ENCODE measurements at regions of chr11 and their contacts with region 1.

Region 1: DNA sequence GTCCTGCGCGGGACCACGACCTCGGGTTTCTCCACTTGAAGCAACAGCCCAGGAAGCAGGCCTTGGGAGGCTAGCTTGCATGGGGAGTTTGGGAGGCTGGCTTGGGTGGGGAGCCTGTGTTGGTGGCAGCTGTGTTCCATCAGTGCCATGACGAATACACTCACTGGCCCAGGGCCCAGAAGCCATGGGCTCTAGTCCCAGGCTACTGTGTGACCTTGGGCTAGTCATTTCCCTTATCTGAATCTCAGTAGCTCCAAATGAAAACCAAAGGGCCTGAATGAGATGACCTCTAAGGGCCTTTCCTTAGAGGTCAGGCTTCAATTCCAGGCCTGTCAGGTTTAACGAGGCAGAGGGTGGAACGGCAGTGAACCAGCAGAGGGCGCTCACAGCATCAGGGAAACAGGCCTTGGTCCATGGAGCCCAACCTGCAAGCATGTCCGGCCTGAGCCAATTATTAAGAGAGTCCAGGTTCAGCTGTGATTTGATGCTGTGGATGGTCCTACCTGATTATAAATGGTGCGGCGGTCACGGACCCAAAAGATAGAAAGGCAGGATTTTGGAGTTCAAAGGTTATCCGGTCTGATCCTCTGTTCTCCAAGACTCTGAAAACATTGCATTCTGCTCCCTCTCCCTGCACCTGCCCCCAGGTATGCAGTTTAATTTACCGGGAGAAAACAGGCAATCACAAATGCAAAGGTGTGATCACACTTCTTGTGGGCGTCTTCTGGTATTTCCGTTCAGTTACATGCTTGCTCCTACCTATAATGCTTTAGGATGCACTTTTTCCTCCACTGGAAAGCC is 15.9 kb downstream of the PTPN5 start:
- DNase-seq: peak; percentile 87
- H3K4me3 Mint-ChIP-seq: no peak overlapping the region
- H3K27ac Mint-ChIP-seq: no peak overlapping the region
- H3K4me1 Mint-ChIP-seq: peaks cover 6% of the 10 kb centered on the region
- H3K27me3 Mint-ChIP-seq: no peaks in the 10 kb centered on the region

Region 2: GRCh38 chr11:18749697-18750319 is 25.9 kb before region 1 on chr11:
- CTCF ChIA-PET with region 1: no interaction called
- intact Hi-C with region 1: no loop called
- DNase-seq: no peak
- H3K4me3 Mint-ChIP-seq: no peak overlapping the region
- H3K27ac Mint-ChIP-seq: no peak overlapping the region
- H3K4me1 Mint-ChIP-seq: no peaks in the 10 kb centered on the region
- H3K27me3 Mint-ChIP-seq: no peaks in the 10 kb centered on the region

Region 3: DNA sequence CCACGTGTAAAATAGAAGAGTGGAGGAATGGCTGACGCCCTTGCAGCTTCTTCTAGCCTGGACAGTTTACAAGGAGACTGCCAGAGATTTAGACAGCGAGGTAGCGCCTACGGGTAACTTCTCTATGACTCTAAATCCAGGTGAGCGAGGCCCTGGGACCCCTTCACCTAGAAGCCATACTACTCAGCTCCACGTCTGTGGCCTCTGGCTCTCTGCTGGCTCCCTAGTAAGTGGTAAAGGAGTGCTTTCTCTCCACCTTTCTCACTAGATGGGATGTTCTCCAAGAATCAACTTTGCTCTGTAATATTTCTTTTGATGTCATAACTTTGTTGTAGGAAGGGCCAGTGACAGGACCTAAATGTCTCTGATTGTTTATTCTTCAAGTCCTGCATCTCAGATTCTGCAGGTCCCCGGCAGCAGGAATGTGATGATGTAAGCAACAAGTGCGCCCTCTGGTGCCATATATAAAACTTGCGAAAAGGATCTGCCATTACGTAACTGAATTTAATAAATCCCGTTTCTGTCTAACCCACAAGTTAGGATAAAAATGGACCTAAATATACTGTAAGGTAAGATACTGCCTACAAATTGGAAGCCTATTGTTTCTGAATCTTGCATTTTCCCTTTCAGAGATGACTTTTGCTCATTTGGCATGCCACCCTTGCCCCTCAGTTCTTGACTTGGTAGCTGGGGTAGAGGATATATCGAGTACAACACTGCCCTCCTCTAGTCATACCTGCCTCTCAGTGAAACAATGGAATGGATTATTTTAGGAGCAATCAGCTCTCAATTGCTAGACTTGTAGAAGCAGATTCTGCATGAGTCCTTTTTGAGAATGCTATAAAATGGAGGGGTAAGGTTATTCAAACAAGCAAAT is 26.9 kb after region 1 on chr11:
- CTCF ChIA-PET with region 1: interaction called, 10 read pairs
- intact Hi-C with region 1: loop called (anchors 1 kb)
- DNase-seq: peak; percentile 67
- H3K4me3 Mint-ChIP-seq: no peak overlapping the region
- H3K27ac Mint-ChIP-seq: no peak overlapping the region
- H3K4me1 Mint-ChIP-seq: no peaks in the 10 kb centered on the region
- H3K27me3 Mint-ChIP-seq: peaks cover 3% of the 10 kb centered on the region

Region 4: GRCh38 chr11:18853086-18853720 is 77.5 kb after region 1 on chr11:
- CTCF ChIA-PET with region 1: interaction called, 3 read pairs
- intact Hi-C with region 1: loop called (anchors 1 kb)
- DNase-seq: no peak
- H3K4me3 Mint-ChIP-seq: no peak overlapping the region
- H3K27ac Mint-ChIP-seq: no peak overlapping the region
- H3K4me1 Mint-ChIP-seq: no peaks in the 10 kb centered on the region
- H3K27me3 Mint-ChIP-seq: peaks cover 9% of the 10 kb centered on the region

Region 5: DNA sequence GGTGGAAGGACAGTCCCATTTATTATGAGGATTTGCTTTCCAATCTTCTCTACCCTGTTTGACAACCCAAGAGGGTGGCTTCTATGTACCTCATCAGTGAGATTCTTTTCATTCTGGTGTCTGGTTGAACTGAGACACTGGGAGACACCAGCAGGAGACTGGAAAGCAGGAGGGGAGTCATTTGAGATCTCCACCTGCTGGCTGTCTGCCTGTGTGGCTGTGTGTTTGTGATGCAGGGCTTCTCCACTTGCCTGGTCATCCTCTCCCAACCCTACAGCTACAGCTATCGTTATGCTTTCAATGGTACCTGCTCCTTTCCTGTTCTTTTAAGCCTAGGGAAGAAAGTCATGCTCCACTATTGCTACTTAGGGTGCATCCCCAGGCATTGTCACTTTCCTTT is 114.9 kb after region 1 on chr11:
- CTCF ChIA-PET with region 1: no interaction called
- intact Hi-C with region 1: no loop called
- DNase-seq: no peak
- H3K4me3 Mint-ChIP-seq: no peak overlapping the region
- H3K27ac Mint-ChIP-seq: no peak overlapping the region
- H3K4me1 Mint-ChIP-seq: no peaks in the 10 kb centered on the region
- H3K27me3 Mint-ChIP-seq: peaks cover 10% of the 10 kb centered on the region

Measured in activated naive CD4-positive, alpha-beta T cell treated with anti-CD3 and anti-CD28 coated beads for 36 hours (primary cell).